ENCODE measurements at regions of chr22 and their contacts with region 1.

Region 1: DNA sequence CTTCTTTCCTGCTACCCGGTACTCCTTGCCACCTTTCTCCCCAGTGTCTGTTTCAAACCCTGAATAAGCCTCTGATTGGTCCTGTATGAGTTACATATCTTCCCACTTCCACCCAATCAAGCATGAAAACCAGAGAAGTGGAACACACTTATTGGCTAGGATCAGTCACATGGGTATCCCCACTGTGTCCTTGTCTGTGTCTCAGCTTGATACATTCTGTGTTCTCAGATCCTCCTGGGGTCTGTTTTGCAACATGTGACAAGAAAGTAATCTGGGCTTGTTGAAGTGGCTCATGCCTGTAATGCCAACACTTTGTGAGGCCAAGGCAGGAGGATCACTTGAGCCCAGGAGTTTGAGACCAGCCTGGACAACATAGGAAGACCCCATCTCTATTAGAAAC is 23.9 kb downstream of the MCHR1 start:
- DNase-seq: no peak
- ATAC-seq: no peak
- H3K4me3 ChIP-seq: no peak overlapping the region
- H3K27ac ChIP-seq: no peak overlapping the region
- H3K4me1 ChIP-seq: no peaks in the 10 kb centered on the region
- H3K27me3 ChIP-seq: no peaks in the 10 kb centered on the region
- CTCF ChIP-seq: no peak

Region 2: GRCh38 chr22:40716116-40716515 is 12.9 kb after region 1 on chr22:
- CTCF ChIA-PET with region 1: no interaction called
- POLR2A ChIA-PET with region 1: interaction called, 13 read pairs
- intact Hi-C with region 1: no loop called
- DNase-seq: peak; percentile 46
- ATAC-seq: peak; percentile 39; the same call in 1 of the 2 replicates
- H3K4me3 ChIP-seq: no peak overlapping the region
- H3K27ac ChIP-seq: no peak overlapping the region
- H3K4me1 ChIP-seq: peaks cover 22% of the 10 kb centered on the region
- H3K27me3 ChIP-seq: no peaks in the 10 kb centered on the region
- CTCF ChIP-seq: no peak